A549 (cell line): ENCODE measurements at regions of chr20 and their contacts with region 1.

Region 1: DNA sequence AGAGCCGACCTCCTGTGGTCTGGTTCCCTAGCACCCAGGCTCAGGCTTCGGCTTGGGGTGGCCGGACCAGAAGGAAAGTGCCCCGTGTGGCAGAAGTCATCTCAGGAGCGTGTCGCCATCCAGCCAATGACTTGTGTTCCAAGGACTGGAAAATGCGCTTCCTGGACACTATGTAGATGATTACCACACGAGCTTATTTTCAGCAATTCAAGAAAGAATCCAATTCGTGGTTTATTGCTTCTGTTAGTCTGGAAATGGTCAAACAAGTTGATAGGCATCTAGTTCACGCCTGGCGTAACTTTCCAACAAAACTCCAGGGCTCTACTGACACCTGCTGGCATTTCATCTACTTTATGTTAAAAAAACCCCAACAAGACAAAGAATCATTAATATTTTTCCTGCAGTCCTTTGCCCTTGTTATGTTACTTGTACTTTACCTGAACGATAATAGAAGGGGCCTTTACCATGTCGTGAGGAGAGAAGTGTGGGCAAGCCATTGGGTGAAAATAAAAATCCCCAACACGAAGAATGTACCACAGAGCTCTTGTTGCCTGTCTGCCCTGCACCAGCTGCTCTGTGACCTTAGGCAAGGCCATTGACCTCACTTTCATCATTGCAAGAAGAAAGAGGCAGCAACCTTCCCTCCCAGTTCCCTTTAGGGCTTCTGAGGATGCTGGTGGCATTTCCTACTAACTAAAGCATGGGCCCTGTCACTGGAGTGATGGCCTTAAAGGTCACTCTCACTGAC is 154.7 kb upstream of the LAMP5 start:
- DNase-seq: peak; percentile 60 to 77
- ATAC-seq: peak; percentile 87 to 93
- H3K4me3 ChIP-seq: no peak overlapping the region
- H3K27ac ChIP-seq: peak overlapping the region; percentile 31 to 53; a peak in 4 of 6 replicates
- H3K4me1 ChIP-seq: peaks cover 8% of the 10 kb centered on the region; the same call in 2 of the 3 replicates
- CTCF ChIP-seq: peak; percentile 99
- EP300 ChIP-seq: no peak
- POLR2A ChIP-seq: no peak
- RAD21 ChIP-seq: peak; percentile 92 to 98

Region 2: DNA sequence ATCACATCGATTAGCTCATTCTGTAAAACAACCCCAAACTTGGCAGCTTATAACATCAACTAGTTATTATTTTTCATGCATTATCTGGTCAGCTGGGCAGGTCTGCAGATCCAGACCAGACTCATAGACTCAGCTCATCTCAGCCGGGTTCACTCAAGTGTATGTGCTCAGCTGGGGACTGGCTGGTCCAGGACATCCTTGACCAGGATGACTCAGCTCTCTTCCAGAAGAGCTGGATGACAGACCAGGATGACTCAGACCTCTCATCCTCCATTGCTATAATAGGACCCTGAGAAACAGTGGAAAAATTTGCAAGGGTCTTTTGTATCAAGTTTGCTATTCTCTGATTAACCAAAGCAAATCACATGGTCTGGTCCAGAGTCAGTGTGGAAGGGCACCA is 603.3 kb before region 1 on chr20:
- CTCF ChIA-PET with region 1: interaction called, 18 read pairs
- POLR2A ChIA-PET with region 1: no interaction called
- DNase-seq: peak; percentile 87 to 93
- ATAC-seq: peak; percentile 96
- H3K4me3 ChIP-seq: no peak overlapping the region
- H3K27ac ChIP-seq: peak overlapping the region; percentile 65 to 78
- H3K4me1 ChIP-seq: peaks cover 21% of the 10 kb centered on the region
- CTCF ChIP-seq: no peak
- EP300 ChIP-seq: 0 out of 5 replicates have a peak, but pooled peaks of 1 of the 2 experiments have one; percentile 9
- POLR2A ChIP-seq: no peak
- RAD21 ChIP-seq: no peak

Region 3: GRCh38 chr20:8790442-8791074 is 569.2 kb before region 1 on chr20:
- CTCF ChIA-PET with region 1: interaction called, 59 read pairs
- POLR2A ChIA-PET with region 1: no interaction called
- DNase-seq: peak; percentile 15 to 63
- ATAC-seq: peak; percentile 69 to 75; a peak in 5 of 6 replicates
- H3K4me3 ChIP-seq: no peak overlapping the region
- H3K27ac ChIP-seq: peak overlapping the region in 1 of 2 experiments; percentile 44; a peak in 1 of 6 replicates
- H3K4me1 ChIP-seq: no peaks in the 10 kb centered on the region
- CTCF ChIP-seq: peak; percentile 99
- EP300 ChIP-seq: no peak
- POLR2A ChIP-seq: no peak
- RAD21 ChIP-seq: peak; percentile 95 to 98

Region 4: GRCh38 chr20:8860011-8860495 is 499.7 kb before region 1 on chr20:
- CTCF ChIA-PET with region 1: interaction called, 71 read pairs
- POLR2A ChIA-PET with region 1: no interaction called
- DNase-seq: peak; percentile 42 to 69
- ATAC-seq: peak; percentile 69 to 93; a peak in 5 of 6 replicates
- H3K4me3 ChIP-seq: no peak overlapping the region
- H3K27ac ChIP-seq: peak overlapping the region in 1 of 2 experiments; percentile 74; a peak in 4 of 6 replicates
- H3K4me1 ChIP-seq: peaks cover 25% of the 10 kb centered on the region
- CTCF ChIP-seq: no peak
- EP300 ChIP-seq: no peak
- POLR2A ChIP-seq: no peak
- RAD21 ChIP-seq: no peak

Region 5: GRCh38 chr20:9319687-9320384 is 39.9 kb before region 1 on chr20:
- CTCF ChIA-PET with region 1: interaction called, 11 read pairs
- POLR2A ChIA-PET with region 1: no interaction called
- DNase-seq: no peak
- ATAC-seq: no peak
- H3K4me3 ChIP-seq: no peak overlapping the region
- H3K27ac ChIP-seq: peak overlapping the region; percentile 29 to 35; a peak in 5 of 6 replicates
- H3K4me1 ChIP-seq: peaks cover 10% of the 10 kb centered on the region
- CTCF ChIP-seq: no peak
- EP300 ChIP-seq: no peak
- POLR2A ChIP-seq: no peak
- RAD21 ChIP-seq: no peak

Region 6: GRCh38 chr20:9344083-9344920 is 15.4 kb before region 1 on chr20:
- CTCF ChIA-PET with region 1: interaction called, 30 read pairs
- POLR2A ChIA-PET with region 1: no interaction called
- DNase-seq: no peak
- ATAC-seq: 0 out of 6 replicates have a peak, but pooled peaks of 1 of the 2 experiments have one; percentile 30
- H3K4me3 ChIP-seq: no peak overlapping the region
- H3K27ac ChIP-seq: peak overlapping the region; percentile 9 to 45; a peak in 1 of 6 replicates
- H3K4me1 ChIP-seq: peaks cover 37% of the 10 kb centered on the region
- CTCF ChIP-seq: no peak
- EP300 ChIP-seq: no peak
- POLR2A ChIP-seq: no peak
- RAD21 ChIP-seq: no peak

Region 7: DNA sequence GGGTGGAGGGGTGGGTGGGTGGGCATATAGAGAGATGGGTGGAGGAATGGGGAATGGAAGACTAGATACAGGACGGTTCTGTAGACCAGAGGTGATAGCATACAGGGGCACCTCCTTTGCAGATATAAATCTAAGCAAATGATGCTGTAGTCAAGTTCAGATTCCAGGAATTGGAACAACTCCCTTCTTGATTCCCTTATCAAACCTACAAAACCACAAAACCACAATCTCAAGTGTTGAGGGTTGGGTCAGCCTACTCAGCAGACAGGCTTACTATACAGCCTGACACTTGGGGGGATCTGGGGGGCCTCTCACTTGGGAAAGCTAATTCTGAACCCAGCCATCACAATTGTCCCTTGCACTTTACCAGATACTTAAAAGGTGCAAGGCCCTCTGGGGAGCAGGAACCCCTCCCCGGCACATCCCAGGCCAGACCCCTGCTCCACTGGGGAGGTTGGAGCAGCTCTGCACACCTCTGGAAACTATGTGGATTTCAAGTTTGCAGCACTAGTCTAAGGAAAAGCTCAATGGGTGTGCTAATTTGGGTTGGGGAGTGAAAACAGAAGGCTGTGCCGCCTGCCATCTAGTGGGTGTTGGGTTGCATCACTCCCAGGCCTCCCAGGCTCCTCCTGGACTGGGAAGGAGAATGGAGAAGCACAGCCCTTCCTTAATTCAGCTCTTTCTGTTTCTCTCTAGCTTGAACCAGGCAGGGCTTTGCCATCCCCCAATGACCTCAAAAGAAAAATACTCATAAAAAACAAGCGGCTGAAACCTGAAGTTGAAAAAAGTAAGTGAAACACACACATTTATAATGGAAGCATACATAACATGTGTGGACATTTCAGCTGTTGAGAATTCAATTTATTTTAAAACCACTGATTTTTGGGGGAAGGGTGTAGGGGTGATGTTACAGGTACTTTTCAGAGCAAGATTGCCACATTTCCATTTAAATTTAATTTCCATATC is 33.4 kb after region 1 on chr20:
- CTCF ChIA-PET with region 1: interaction called, 12 read pairs
- POLR2A ChIA-PET with region 1: no interaction called
- DNase-seq: peak; percentile 62 to 73
- ATAC-seq: peak; percentile 96 to 98
- H3K4me3 ChIP-seq: no peak overlapping the region
- H3K27ac ChIP-seq: 0 out of 6 replicates have a peak overlapping the region, but pooled peaks of 1 of the 2 experiments have one; percentile 26
- H3K4me1 ChIP-seq: 0 out of 3 replicates have a peak, but pooled peaks cover 4% of the 10 kb centered on the region
- CTCF ChIP-seq: peak; percentile 86
- EP300 ChIP-seq: no peak
- POLR2A ChIP-seq: no peak
- RAD21 ChIP-seq: peak; percentile 85 to 91